ENCODE measurements at regions of chr2 and their contacts with region 1.

Region 1: GRCh38 chr2:202911512-202912341 is at the starts of genes CARF and WDR12:
- DNase-seq: peak; percentile 87 to 88
- ATAC-seq: peak; percentile 94 to 96
- H3K4me3 ChIP-seq: peak within 1 kb of the TSS; percentile 83 to 100 (median 92)
- H3K27ac ChIP-seq: peak within 1 kb of the TSS; percentile 90 to 99 (median 94)
- H3K4me1 ChIP-seq: peaks cover 25 to 27% of the 10 kb centered on the region in 2 donors
- H3K27me3 ChIP-seq: no peaks in the 10 kb centered on the region
- CTCF ChIP-seq: no peak
- POLR2A ChIP-seq: peak; percentile 41 to 56
- total RNA-seq, gene CARF: 2.2 to 12.2 (median 4.0) TPM
- total RNA-seq, gene WDR12: 5.3 to 83.2 (median 18.7) TPM

Region 2: GRCh38 chr2:202808754-202809153 is 103.0 kb before region 1 on chr2:
- in situ Hi-C with region 1: no loop called
- intact Hi-C with region 1: loop called (anchors 5 kb)
- DNase-seq: no peak
- ATAC-seq: no peak
- H3K4me3 ChIP-seq: no peak overlapping the region
- H3K27ac ChIP-seq: peak overlapping the region in 1 of 4 donors; percentile 80
- H3K4me1 ChIP-seq: peaks cover 11 to 28% of the 10 kb centered on the region in 2 donors
- H3K27me3 ChIP-seq: no peaks in the 10 kb centered on the region
- CTCF ChIP-seq: no peak
- POLR2A ChIP-seq: no peak

Region 3: GRCh38 chr2:203014456-203015199 is 102.9 kb after region 1 on chr2 and contains the start of gene NBEAL1:
- in situ Hi-C with region 1: no loop called
- intact Hi-C with region 1: loop called (anchors 1 kb)
- DNase-seq: peak; percentile 97 to 98
- ATAC-seq: peak; percentile 94 to 97
- H3K4me3 ChIP-seq: peak within 1 kb of the TSS; percentile 70 to 88 (median 78)
- H3K27ac ChIP-seq: peak within 1 kb of the TSS; percentile 90 to 96 (median 94)
- H3K4me1 ChIP-seq: peaks cover 36 to 42% of the 10 kb centered on the region in 2 donors
- H3K27me3 ChIP-seq: no peaks in the 10 kb centered on the region
- CTCF ChIP-seq: no peak
- POLR2A ChIP-seq: peak; percentile 76 to 86
- total RNA-seq, gene NBEAL1: 9.8 to 21.9 (median 11.3) TPM

Region 4: DNA sequence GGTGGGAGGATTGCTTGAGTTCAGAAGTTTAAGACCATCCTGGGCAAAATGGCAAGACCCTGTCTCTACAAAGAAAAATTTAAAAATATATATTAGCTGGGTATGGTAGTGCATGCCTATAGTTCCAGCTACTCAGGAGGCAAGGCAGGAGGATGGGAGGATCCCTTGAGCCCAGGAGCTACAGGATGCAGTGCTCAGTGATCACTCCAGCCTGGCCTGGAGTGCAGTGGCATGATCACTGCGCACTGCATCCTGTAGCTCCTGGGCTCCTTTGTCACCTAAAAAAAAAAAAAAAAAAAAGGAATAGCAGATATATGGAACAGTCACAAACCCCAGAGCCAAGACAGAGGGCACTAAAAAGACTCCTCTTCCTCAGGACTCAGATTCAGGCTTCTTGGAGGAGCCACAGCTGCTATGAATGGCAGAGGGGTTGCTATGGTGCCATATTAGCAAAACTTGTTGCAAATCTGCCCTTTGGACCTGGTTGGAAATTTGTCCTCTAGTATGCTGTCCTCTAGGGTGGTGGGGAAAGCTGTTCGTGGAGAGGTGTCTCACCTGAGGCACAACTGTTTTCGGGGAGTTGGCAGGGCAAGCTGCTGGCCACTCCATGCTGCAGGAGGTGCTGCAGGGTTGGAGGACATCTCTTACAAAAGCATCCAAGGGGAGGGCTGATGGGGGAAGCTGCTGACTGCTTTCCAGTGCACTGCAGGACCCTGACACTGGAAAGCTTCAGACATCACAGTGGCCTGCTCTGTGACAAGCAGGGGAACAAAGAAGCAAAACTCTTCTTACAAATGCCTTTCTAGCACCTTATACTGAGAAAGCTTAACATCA is 349.8 kb after region 1 on chr2:
- in situ Hi-C with region 1: no loop called
- intact Hi-C with region 1: no loop called
- DNase-seq: no peak
- ATAC-seq: no peak
- H3K4me3 ChIP-seq: no peak overlapping the region
- H3K27ac ChIP-seq: no peak overlapping the region
- H3K4me1 ChIP-seq: no peaks in the 10 kb centered on the region
- H3K27me3 ChIP-seq: no peaks in the 10 kb centered on the region
- CTCF ChIP-seq: no peak
- POLR2A ChIP-seq: no peak

Measured in gastrocnemius medialis (tissue), 4 donors.